ENCODE measurements at regions of chr1 and their contacts with region 1.

Region 1: DNA sequence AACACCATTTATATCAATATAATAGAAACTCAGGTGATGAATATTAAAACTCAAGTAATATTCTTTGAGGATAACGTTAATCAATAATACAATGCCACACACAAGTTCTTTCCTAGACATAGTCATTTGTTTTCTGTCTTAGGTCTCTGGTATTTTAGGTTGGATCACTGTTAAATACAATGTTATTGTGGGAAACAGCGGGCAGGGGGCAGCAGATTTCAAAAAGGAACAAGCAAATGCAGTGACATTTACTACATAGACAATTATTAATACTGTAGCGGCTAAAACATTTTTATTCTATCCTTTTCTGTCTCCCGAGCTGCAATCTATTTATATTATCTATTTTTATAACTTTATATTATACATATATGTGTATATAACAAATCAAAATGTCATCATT is 186.4 kb upstream of the ZNHIT6 start:
- DNase-seq: peak; percentile 46
- ATAC-seq: peak; percentile 76
- H3K4me3 ChIP-seq: no peak overlapping the region
- H3K27ac ChIP-seq: no peak overlapping the region
- H3K4me1 ChIP-seq: no peaks in the 10 kb centered on the region
- H3K27me3 ChIP-seq: no peaks in the 10 kb centered on the region
- CTCF ChIP-seq: peak; percentile 63
- POLR2A ChIP-seq: no peak
- RAD21 ChIP-seq: peak; percentile 62

Region 2: DNA sequence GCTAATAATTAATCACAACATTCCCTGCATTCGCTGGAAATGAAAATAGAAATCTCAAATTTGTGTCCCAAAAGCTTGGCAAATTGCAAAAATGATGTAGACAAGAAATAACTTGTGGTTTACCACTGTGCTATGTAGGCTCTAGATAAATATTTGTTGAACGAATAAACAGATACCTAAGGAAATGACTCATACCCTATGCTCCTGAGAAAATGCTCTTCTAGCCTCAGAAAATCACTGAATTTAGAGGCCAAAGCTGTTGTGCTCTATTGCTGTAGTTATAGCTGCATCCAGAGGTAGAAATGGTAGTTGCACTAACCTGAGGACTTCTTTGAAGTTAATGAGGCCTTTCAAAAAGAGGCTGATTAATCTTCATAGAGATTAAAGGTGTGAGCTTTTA is 44.4 kb before region 1 on chr1:
- CTCF ChIA-PET with region 1: no interaction called
- POLR2A ChIA-PET with region 1: no interaction called
- dilution Hi-C with region 1: no loop called
- in situ Hi-C with region 1: no loop called
- intact Hi-C with region 1: loop called (anchors 1 kb)
- DNase-seq: peak; percentile 95
- ATAC-seq: peak; percentile 97
- H3K4me3 ChIP-seq: no peak overlapping the region
- H3K27ac ChIP-seq: no peak overlapping the region; the same call in 1 of the 2 replicates
- H3K4me1 ChIP-seq: peaks cover 4% of the 10 kb centered on the region; the same call in 1 of the 2 replicates
- H3K27me3 ChIP-seq: no peaks in the 10 kb centered on the region
- CTCF ChIP-seq: peak; percentile 54
- POLR2A ChIP-seq: no peak
- RAD21 ChIP-seq: peak; percentile 69

Region 3: GRCh38 chr1:85992791-85993190 is 98.1 kb after region 1 on chr1:
- CTCF ChIA-PET with region 1: no interaction called
- POLR2A ChIA-PET with region 1: no interaction called
- dilution Hi-C with region 1: no loop called
- in situ Hi-C with region 1: no loop called
- intact Hi-C with region 1: no loop called
- DNase-seq: peak; percentile 76
- ATAC-seq: peak; percentile 84
- H3K4me3 ChIP-seq: no peak overlapping the region
- H3K27ac ChIP-seq: peak overlapping the region; percentile 68; the same call in 1 of the 2 replicates
- H3K4me1 ChIP-seq: no peaks in the 10 kb centered on the region
- H3K27me3 ChIP-seq: no peaks in the 10 kb centered on the region
- CTCF ChIP-seq: no peak
- POLR2A ChIP-seq: no peak
- RAD21 ChIP-seq: no peak

Region 4: GRCh38 chr1:86018283-86018923 is 123.8 kb after region 1 on chr1:
- CTCF ChIA-PET with region 1: no interaction called
- POLR2A ChIA-PET with region 1: no interaction called
- dilution Hi-C with region 1: no loop called
- in situ Hi-C with region 1: no loop called
- intact Hi-C with region 1: loop called (anchors 1 kb)
- DNase-seq: peak; percentile 23
- ATAC-seq: peak; percentile 67; the same call in 1 of the 2 replicates
- H3K4me3 ChIP-seq: no peak overlapping the region
- H3K27ac ChIP-seq: no peak overlapping the region
- H3K4me1 ChIP-seq: no peaks in the 10 kb centered on the region
- H3K27me3 ChIP-seq: no peaks in the 10 kb centered on the region
- CTCF ChIP-seq: peak; percentile 68
- POLR2A ChIP-seq: no peak
- RAD21 ChIP-seq: peak; percentile 62

Region 5: DNA sequence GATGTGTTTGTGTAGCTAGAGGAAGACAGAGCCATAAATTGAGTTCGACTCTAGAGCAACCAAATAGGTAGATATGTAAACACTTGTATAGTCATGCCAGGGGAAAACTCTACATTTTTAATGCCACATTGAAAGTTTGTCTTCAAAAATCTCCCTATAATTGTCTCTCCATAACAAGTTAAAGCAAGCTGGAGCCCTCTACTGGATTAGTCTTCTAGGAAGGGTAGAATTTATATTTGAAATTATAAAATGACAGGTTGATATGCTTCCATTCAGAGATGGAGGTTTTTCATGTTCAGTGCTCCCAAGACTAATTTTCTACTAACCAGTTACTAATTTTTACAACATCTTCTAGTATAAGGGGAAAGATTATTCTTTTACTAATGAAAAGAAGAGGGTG is 275.0 kb after region 1 on chr1:
- CTCF ChIA-PET with region 1: no interaction called
- POLR2A ChIA-PET with region 1: no interaction called
- dilution Hi-C with region 1: no loop called
- in situ Hi-C with region 1: loop called (anchors 5 kb)
- intact Hi-C with region 1: loop called (anchors 1 kb)
- DNase-seq: peak; percentile 36
- ATAC-seq: peak; percentile 76
- H3K4me3 ChIP-seq: no peak overlapping the region
- H3K27ac ChIP-seq: no peak overlapping the region
- H3K4me1 ChIP-seq: no peaks in the 10 kb centered on the region
- H3K27me3 ChIP-seq: no peaks in the 10 kb centered on the region
- CTCF ChIP-seq: peak; percentile 56
- POLR2A ChIP-seq: no peak
- RAD21 ChIP-seq: peak; percentile 55

Region 6: GRCh38 chr1:86356247-86356646 is 461.6 kb after region 1 on chr1:
- CTCF ChIA-PET with region 1: no interaction called
- POLR2A ChIA-PET with region 1: no interaction called
- dilution Hi-C with region 1: no loop called
- in situ Hi-C with region 1: loop called (anchors 10 kb)
- intact Hi-C with region 1: loop called (anchors 5 kb)
- DNase-seq: peak; percentile 10
- ATAC-seq: no peak
- H3K4me3 ChIP-seq: no peak overlapping the region
- H3K27ac ChIP-seq: no peak overlapping the region
- H3K4me1 ChIP-seq: no peaks in the 10 kb centered on the region
- H3K27me3 ChIP-seq: no peaks in the 10 kb centered on the region
- CTCF ChIP-seq: 0 out of 2 replicates have a peak, but pooled peaks have one; percentile 15
- POLR2A ChIP-seq: no peak
- RAD21 ChIP-seq: peak; percentile 42

Region 7: DNA sequence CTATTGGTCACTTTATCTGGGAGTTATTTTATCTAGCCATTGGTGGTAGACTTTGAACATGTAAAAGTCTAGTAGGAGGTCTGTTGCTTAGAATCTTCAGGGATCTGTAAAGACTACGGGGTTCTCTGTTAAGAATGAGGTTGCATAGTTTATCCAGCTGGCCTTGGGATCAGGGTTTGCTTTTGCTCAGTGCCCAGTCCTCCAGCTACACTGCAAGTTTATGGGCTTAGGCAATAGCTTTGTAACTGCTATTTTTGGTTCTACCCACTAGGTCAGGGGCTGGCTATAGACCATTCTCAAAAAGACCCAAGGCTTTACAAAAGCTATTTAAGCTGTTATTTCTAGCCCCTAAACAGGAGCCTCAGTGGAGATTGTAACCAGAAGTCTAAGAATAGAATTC is 819.5 kb after region 1 on chr1:
- CTCF ChIA-PET with region 1: no interaction called
- POLR2A ChIA-PET with region 1: no interaction called
- dilution Hi-C with region 1: no loop called
- in situ Hi-C with region 1: no loop called
- intact Hi-C with region 1: no loop called
- DNase-seq: peak; percentile 23
- ATAC-seq: peak; percentile 72
- H3K4me3 ChIP-seq: no peak overlapping the region
- H3K27ac ChIP-seq: no peak overlapping the region
- H3K4me1 ChIP-seq: peaks cover 8% of the 10 kb centered on the region
- H3K27me3 ChIP-seq: no peaks in the 10 kb centered on the region
- CTCF ChIP-seq: no peak
- POLR2A ChIP-seq: no peak
- RAD21 ChIP-seq: no peak